OCI-LY7 (cell line): ENCODE measurements at regions of chr2 and their contacts with region 1.

Region 1: DNA sequence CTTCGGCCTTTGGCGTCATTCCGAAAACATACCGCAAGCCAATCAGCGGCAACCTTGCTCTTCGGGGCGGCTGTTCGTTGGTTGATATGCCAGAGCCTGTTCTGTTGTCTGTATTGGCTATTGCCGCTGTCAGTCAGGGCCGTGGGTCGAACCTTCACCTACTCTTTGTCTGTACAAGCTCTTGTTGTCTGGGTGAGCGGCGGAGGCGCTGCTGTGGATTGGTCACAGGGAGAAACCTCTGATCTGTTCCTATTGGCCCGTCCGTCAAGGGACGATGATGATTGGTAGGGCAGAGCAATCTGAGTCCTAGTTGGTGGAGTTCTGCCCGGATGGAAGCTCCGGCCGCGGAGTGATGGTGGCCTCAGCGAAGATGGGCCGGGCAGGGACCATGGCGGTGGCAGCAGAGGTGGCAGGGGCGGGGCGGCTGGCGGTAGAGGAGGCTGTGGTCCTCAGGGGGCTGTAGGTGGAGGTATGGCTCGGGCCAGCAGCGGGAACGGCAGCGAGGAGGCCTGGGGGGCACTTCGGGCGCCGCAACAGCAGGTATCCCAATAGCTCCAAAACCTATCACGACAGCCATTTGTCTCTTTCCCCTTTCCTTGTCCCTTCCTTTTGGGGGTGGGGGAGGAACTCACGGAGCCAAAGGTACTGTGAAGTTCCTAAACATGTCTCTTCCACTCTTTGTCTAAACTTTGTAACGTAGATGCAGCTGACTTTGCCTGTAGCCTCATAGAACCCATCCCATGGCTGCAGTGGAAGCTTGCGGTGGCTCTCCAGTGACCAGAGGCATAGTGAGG is at the start of gene WBP1:
- DNase-seq: peak; percentile 100
- H3K4me3 ChIP-seq: peak within 1 kb of the TSS; percentile 98
- H3K27ac ChIP-seq: peak within 1 kb of the TSS; percentile 92
- H3K4me1 ChIP-seq: peaks cover 29% of the 10 kb centered on the region
- CTCF ChIP-seq: no peak
- total RNA-seq, gene WBP1: 70.7 and 70.8 TPM in 2 replicates

Region 2: DNA sequence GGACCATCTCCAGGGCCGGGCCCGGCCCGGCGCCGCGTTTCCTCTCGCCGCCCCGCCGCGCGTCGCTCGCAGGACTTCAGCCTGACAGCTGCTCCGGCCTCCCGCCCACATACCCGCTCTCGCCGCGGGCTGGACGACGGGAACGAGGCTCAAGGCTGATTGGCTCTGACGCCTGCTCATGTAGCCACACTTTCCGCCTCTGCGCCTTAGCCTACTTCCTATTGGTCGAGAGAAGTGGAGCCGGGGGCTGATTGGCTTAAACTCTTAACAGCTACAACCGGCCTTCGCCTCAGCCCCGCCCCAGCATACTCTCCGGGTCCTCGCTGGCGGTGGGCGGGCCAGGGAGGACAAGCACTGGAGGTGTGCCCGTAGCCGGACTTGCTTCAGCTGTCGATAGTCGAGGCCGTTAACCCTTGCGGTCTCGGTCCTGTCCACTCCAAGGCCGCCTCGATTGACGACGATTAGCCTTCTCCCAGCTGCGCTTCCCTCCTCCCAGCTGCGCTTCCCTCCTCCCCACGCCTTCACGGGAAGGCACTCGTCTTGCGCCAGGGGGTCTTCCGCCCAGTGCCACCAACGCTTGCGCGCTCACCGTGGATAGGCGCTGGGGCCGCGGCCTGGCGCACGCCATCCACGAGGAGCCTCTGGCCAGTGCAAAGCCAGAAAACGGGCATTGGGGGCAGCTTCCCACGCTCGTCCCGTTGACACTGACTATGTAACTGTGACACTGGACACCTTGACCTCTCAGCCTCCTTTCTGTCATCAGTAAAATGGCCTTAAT is 1225.0 kb before region 1 on chr2 and contains the start of gene PRADC1:
- CTCF ChIA-PET with region 1: no interaction called
- POLR2A ChIA-PET with region 1: no interaction called
- intact Hi-C with region 1: loop called (anchors 2 kb)
- DNase-seq: peak; percentile 99
- H3K4me3 ChIP-seq: peak within 1 kb of the TSS; percentile 93
- H3K27ac ChIP-seq: peak within 1 kb of the TSS; percentile 78
- H3K4me1 ChIP-seq: peaks cover 27% of the 10 kb centered on the region
- CTCF ChIP-seq: no peak
- total RNA-seq, gene PRADC1: 25.3 and 25.9 TPM in 2 replicates

Region 3: DNA sequence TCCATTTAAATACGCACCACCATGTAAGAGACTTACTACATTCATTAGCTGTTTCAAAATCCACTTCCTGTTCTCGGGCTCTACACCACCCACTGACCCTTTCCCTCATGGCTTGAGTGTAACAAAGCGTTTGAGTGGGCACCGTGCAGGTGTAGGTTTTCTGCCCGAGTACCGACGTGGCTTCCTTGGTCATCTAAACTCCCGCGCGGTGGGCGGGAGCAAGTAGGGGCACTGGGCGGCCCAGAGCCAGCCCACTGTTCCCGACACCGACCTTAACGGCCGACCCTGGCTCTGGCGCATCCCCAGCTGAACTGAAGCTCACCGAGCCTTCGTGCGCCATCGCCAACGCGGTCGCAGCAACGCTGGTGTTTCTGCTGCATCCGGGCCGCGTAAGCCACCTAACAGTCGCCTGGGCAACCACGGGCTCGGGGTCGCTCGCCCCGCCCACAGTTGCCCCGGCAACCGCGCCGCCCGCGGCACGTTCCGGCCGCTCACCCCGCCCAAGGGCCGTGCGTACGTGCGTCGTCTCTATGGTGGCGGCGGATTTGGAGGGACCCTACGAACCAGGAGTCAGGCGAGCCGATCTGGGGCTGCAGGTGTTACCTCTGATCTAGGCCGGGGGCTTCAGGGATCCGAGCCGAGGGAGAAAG is 37.0 kb before region 1 on chr2 and contains the starts of genes C2orf81 and WDR54:
- CTCF ChIA-PET with region 1: interaction called, 4 read pairs
- POLR2A ChIA-PET with region 1: interaction called, 6 read pairs
- intact Hi-C with region 1: loop called (anchors 1 kb)
- DNase-seq: peak; percentile 97
- H3K4me3 ChIP-seq: peak within 1 kb of the TSS; percentile 82
- H3K27ac ChIP-seq: peak within 1 kb of the TSS; percentile 88
- H3K4me1 ChIP-seq: peaks cover 33% of the 10 kb centered on the region
- CTCF ChIP-seq: no peak
- total RNA-seq, gene C2orf81: 3.2 and 5.5 TPM in 2 replicates
- total RNA-seq, gene WDR54: 55.5 and 64.7 TPM in 2 replicates

Region 4: GRCh38 chr2:74440378-74441169 is 17.8 kb before region 1 on chr2:
- CTCF ChIA-PET with region 1: interaction called, 3 read pairs
- POLR2A ChIA-PET with region 1: interaction called, 17 read pairs
- intact Hi-C with region 1: no loop called
- DNase-seq: peak; percentile 58
- H3K4me3 ChIP-seq: peak overlapping the region; percentile 33
- H3K27ac ChIP-seq: no peak overlapping the region
- H3K4me1 ChIP-seq: peaks cover 34% of the 10 kb centered on the region
- CTCF ChIP-seq: no peak

Region 5: DNA sequence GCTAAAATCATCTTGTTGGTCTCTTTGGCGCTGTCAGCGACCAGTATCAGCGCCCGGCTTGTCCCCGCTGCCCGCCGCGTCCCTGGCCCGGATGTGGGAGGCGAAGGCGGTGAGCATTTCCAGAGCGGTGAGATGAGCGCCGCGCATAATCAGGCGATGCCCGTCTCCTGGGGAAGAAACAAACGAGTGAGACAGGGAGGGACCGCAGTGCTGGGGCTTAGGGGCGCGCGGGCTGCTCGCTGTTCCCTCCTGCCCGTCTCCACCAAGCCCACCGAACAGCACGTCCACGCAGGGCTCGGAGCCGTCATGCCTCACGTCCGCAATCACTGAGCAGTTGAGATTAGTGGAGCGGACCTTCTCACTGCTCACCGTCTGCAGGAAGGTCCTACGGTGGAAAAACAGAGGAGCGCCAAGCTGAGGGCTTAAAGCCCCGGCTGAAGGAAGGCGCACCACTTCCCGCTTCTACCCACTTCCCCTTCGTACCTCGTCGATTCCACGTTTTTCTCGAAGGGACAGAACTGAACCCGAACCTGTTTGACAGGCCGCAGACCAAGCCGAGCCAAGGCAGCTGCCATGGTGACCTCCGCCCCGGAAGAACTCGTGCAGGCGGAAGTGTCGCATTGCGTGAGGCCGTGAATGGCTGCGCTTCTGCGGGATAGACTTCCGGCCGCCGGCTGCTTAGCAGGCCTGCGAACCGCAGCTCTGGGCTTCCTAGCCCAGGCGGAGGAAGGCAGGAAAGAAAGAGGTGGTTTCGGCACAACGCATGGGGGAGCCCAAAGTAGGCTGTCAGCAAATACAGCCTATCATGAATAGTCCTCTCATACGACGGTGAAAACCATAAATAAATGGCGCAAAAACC is 14.0 kb after region 1 on chr2 and contains the start of gene MRPL53:
- CTCF ChIA-PET with region 1: interaction called, 6 read pairs
- POLR2A ChIA-PET with region 1: interaction called, 11 read pairs
- intact Hi-C with region 1: no loop called
- DNase-seq: peak; percentile 97
- H3K4me3 ChIP-seq: peak within 1 kb of the TSS; percentile 85
- H3K27ac ChIP-seq: peak within 1 kb of the TSS; percentile 81
- H3K4me1 ChIP-seq: peaks cover 16% of the 10 kb centered on the region
- CTCF ChIP-seq: 0 out of 2 replicates have a peak, but pooled peaks have one; percentile 20
- total RNA-seq, gene MRPL53: 46.1 and 85.7 TPM in 2 replicates

Region 6: DNA sequence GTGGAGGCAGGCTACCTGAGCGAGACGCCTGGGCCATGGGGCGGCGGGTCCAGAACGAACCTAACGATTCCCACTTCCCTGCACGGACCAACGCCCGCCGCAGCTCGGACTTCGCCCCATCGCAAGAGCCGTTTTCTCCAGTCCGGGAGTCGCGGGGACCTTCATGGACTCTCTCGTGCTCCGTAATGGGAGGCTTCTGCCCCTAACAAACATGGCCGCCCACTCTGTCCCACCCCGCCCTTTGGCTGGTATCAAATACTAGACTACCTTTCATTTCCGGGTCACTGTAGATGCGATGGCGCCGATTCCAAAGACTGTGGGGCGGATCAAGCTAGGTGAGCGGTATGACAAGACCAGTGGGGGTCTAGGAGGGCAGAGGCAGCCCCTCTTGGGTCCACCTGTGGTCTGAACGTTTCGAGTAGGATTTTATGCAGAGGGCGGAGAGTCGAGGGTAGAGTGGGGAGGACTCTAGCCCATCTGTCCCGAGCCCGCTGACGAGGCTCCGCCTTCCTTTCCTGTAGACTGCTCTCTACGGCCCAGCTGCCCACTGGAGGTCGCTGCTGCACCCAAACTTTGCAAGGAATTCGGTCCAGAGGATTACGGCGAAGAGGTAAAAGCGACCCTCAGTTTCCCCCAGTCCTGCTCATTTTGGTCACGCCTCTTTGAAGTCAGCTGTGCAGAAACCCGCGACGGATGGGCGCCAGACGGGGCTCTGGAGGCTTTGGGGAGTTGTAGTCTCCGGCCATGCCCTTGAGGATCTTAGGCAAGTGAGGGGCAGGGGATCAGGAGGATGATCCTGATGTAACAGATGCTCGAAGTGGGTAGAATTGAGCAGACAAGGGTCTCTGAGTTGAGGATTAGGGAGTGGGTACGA is 24.7 kb after region 1 on chr2 and contains the starts of genes CCDC142 and TTC31:
- CTCF ChIA-PET with region 1: interaction called, 5 read pairs
- POLR2A ChIA-PET with region 1: interaction called, 25 read pairs
- intact Hi-C with region 1: loop called (anchors 1 kb)
- DNase-seq: peak; percentile 95
- H3K4me3 ChIP-seq: peak within 1 kb of the TSS; percentile 78
- H3K27ac ChIP-seq: peak within 1 kb of the TSS; percentile 80
- H3K4me1 ChIP-seq: peaks cover 18% of the 10 kb centered on the region
- CTCF ChIP-seq: peak; percentile 95
- total RNA-seq, gene CCDC142: 52.3 and 53.0 TPM in 2 replicates
- total RNA-seq, gene TTC31: 34.6 and 49.5 TPM in 2 replicates

Region 7: GRCh38 chr2:74498500-74499266 is 40.4 kb after region 1 on chr2:
- CTCF ChIA-PET with region 1: no interaction called
- POLR2A ChIA-PET with region 1: no interaction called
- intact Hi-C with region 1: no loop called
- DNase-seq: no peak
- H3K4me3 ChIP-seq: no peak overlapping the region
- H3K27ac ChIP-seq: no peak overlapping the region
- H3K4me1 ChIP-seq: peaks cover 9% of the 10 kb centered on the region
- CTCF ChIP-seq: no peak

Region 8: DNA sequence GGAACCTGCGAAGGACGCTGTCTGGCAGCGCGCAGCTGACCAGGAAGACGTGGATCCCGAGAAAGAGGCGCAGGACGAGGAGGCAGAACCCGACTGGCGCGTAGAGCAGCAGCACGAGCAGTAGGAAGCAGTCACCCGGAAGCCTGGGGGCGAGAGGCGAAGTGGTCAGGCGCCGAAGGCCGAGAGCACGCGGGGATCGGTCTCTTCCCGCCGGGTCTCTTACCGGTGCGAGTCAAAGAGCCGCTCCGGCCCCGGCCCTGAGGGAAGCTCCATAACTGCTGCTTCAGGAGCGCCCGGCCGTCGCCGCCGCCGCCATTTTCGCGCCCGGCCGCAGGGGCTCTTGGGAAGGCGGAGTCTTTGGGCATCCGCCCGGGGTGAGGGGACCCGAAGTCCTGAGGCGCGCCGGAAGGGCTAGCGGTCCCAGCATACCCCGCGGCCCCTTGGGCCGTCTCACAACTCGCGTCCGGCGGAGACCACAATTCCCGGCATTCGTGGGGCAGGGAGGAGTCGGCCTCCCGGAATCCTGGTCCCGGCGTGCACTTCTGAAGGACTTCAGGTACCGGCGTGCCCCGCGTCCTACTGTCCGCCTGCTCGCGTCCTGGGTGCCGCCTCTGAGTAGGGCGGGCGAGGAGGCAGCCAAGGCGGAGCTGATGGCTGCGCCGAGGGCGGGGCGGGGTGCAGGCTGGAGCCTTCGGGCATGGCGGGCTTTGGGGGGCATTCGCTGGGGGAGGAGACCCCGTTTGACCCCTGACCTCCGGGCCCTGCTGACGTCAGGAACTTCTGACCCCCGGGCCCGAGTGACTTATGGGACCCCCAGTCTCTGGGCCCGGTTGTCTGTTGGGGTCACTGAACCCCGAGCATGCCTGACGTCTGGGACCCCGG is 71.3 kb after region 1 on chr2 and contains the starts of genes AUP1 and HTRA2:
- CTCF ChIA-PET with region 1: no interaction called
- POLR2A ChIA-PET with region 1: no interaction called
- intact Hi-C with region 1: loop called (anchors 1 kb)
- DNase-seq: peak; percentile 99
- H3K4me3 ChIP-seq: peak within 1 kb of the TSS; percentile 98
- H3K27ac ChIP-seq: peak within 1 kb of the TSS; percentile 67
- H3K4me1 ChIP-seq: peaks cover 33% of the 10 kb centered on the region
- CTCF ChIP-seq: no peak
- total RNA-seq, gene AUP1: 163 and 188 TPM in 2 replicates
- total RNA-seq, gene HTRA2: 54.8 and 60.4 TPM in 2 replicates